Ascending aorta (tissue), 2 donors: ENCODE measurements at regions of chr7 and their contacts with region 1.

Region 1: GRCh38 chr7:27095897-27096767 is at the start of gene HOXA1:
- DNase-seq: peak; percentile 44 to 94
- H3K4me3 ChIP-seq: peak within 1 kb of the TSS; percentile 79 to 82
- H3K27ac ChIP-seq: peak within 1 kb of the TSS; percentile 89 to 97
- H3K4me1 ChIP-seq: peaks cover 0 to 18% of the 10 kb centered on the region in 2 donors
- H3K27me3 ChIP-seq: no peaks in the 10 kb centered on the region
- CTCF ChIP-seq: no peak
- total RNA-seq, gene HOXA1: not detected

Region 2: DNA sequence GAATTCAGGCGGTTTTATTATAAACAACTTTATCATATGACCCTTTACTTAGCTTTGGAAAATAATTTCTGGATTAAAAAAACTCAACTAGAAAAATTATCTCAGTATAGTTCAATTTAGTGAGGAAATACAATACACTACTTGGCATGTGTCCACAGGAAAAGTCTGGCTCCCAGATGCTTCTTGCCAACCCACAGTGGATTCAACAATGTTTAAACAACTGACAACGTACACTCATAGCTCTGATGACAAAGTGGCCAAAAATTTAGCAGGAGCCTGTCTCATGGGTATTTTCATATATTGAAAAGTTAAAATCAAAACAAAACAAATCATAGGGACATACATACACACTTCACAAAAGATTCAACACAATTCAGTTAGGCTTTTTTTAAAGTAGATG is 390.6 kb before region 1 on chr7:
- intact Hi-C with region 1: no loop called
- DNase-seq: no peak
- H3K4me3 ChIP-seq: no peak overlapping the region
- H3K27ac ChIP-seq: no peak overlapping the region
- H3K4me1 ChIP-seq: peaks cover 0 to 9% of the 10 kb centered on the region in 2 donors
- H3K27me3 ChIP-seq: no peaks in the 10 kb centered on the region
- CTCF ChIP-seq: no peak

Region 3: GRCh38 chr7:26853788-26854393 is 242.2 kb before region 1 on chr7:
- intact Hi-C with region 1: loop called (anchors 2 kb)
- DNase-seq: no peak
- H3K4me3 ChIP-seq: no peak overlapping the region
- H3K27ac ChIP-seq: no peak overlapping the region
- H3K4me1 ChIP-seq: peaks cover 0 to 2% of the 10 kb centered on the region in 2 donors
- H3K27me3 ChIP-seq: no peaks in the 10 kb centered on the region
- CTCF ChIP-seq: peak; percentile 37 to 67 (median 50)

Region 4: GRCh38 chr7:26864309-26865093 is 231.6 kb before region 1 on chr7 and contains the start of gene SKAP2:
- intact Hi-C with region 1: loop called (anchors 2 kb)
- DNase-seq: peak; percentile 92 to 99
- H3K4me3 ChIP-seq: peak within 1 kb of the TSS; percentile 66 to 89
- H3K27ac ChIP-seq: peak within 1 kb of the TSS; percentile 87 to 90
- H3K4me1 ChIP-seq: no peaks in the 10 kb centered on the region
- H3K27me3 ChIP-seq: no peaks in the 10 kb centered on the region
- CTCF ChIP-seq: peak in 1 of 3 experiments; percentile 11
- total RNA-seq, gene SKAP2: 50.2 TPM

Region 5: DNA sequence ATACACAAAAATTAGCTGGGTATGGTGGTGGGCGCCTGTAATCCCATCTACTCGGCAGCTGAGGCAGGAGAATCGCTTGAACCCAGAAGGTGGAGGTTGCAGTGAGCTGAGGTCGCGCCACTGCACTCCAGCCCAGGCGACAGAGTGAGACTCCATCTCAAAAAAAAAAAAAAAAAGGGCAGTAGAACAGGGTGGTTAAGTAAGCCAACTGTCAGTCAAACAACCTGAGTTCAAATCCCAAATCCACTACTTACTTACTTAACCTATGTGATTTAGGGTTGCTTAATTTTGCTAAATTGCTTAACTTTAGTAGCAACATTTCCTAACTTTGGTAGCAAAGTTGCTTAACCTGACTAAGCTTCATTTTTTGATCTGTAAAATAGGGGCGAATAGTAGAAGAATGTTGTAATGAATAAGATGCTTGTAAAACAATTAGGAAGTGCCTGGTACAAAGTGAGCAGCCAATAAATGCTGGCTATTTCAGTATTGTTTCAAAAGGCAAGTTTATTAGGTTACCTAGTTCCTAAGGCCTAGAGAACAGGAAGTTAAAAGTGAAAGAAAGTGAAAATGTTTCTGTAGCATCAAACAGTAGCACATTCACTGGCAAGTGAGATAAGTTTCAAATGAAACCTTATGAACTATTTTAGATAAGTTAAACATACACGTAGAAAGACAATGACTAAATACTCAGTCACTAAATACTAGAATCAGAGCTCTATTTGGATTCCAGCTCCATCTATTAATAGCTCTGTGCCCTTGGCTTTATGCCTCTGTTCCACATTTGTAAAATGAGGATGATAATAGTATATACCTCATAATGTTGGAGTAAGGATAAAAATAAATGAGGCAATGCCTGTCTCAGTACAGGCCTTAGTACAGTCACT is 64.6 kb before region 1 on chr7:
- intact Hi-C with region 1: loop called (anchors 5 kb)
- DNase-seq: no peak
- H3K4me3 ChIP-seq: no peak overlapping the region
- H3K27ac ChIP-seq: peak overlapping the region; percentile 67 to 72
- H3K4me1 ChIP-seq: peaks cover 0 to 8% of the 10 kb centered on the region in 2 donors
- H3K27me3 ChIP-seq: no peaks in the 10 kb centered on the region
- CTCF ChIP-seq: no peak

Region 6: GRCh38 chr7:27112955-27113949 is 17.1 kb after region 1 on chr7:
- intact Hi-C with region 1: loop called (anchors 2 kb)
- DNase-seq: no peak
- H3K4me3 ChIP-seq: peak overlapping the region; percentile 63 to 81
- H3K27ac ChIP-seq: peak overlapping the region; percentile 89 to 97
- H3K4me1 ChIP-seq: peaks cover 8 to 15% of the 10 kb centered on the region in 2 donors
- H3K27me3 ChIP-seq: no peaks in the 10 kb centered on the region
- CTCF ChIP-seq: no peak

Region 7: GRCh38 chr7:27130540-27131389 is 34.6 kb after region 1 on chr7 and contains the start of gene HOXA4:
- intact Hi-C with region 1: loop called (anchors 2 kb)
- DNase-seq: peak; percentile 62 to 96
- H3K4me3 ChIP-seq: peak within 1 kb of the TSS; percentile 87
- H3K27ac ChIP-seq: peak within 1 kb of the TSS; percentile 86 to 89
- H3K4me1 ChIP-seq: peaks cover 0 to 2% of the 10 kb centered on the region in 2 donors
- H3K27me3 ChIP-seq: no peaks in the 10 kb centered on the region
- CTCF ChIP-seq: no peak
- total RNA-seq, gene HOXA4: 2.1 TPM

Region 8: GRCh38 chr7:27143023-27143949 is 47.2 kb after region 1 on chr7 and contains the start of gene HOXA5:
- intact Hi-C with region 1: loop called (anchors 2 kb)
- DNase-seq: peak; percentile 42 to 94
- H3K4me3 ChIP-seq: peak within 1 kb of the TSS; percentile 75 to 91
- H3K27ac ChIP-seq: peak within 1 kb of the TSS; percentile 92 to 98
- H3K4me1 ChIP-seq: peaks cover 0 to 5% of the 10 kb centered on the region in 2 donors
- H3K27me3 ChIP-seq: no peaks in the 10 kb centered on the region
- CTCF ChIP-seq: peak; percentile 88 to 97 (median 94)
- total RNA-seq, gene HOXA5: 22.0 TPM

Region 9: GRCh38 chr7:27235387-27236311 is 139.5 kb after region 1 on chr7:
- intact Hi-C with region 1: no loop called
- DNase-seq: no peak
- H3K4me3 ChIP-seq: peak overlapping the region; percentile 40 to 44
- H3K27ac ChIP-seq: no peak overlapping the region
- H3K4me1 ChIP-seq: peaks cover 0 to 8% of the 10 kb centered on the region in 2 donors
- H3K27me3 ChIP-seq: peaks cover 13% of the 10 kb centered on the region
- CTCF ChIP-seq: peak in 1 of 3 experiments; percentile 20